ENCODE measurements at regions of chr11 and their contacts with region 1.

Region 1: GRCh38 chr11:74702383-74703007 is 28.7 kb downstream of the CHRDL2 start:
- DNase-seq: peak; percentile 84
- H3K4me3 ChIP-seq: no peak overlapping the region
- H3K27ac ChIP-seq: no peak overlapping the region
- H3K4me1 ChIP-seq: no peaks in the 10 kb centered on the region
- H3K27me3 ChIP-seq: no peaks in the 10 kb centered on the region
- CTCF ChIP-seq: peak; percentile 97

Region 2: GRCh38 chr11:74720596-74721478 is 18.3 kb after region 1 on chr11:
- CTCF ChIA-PET with region 1: interaction called, 34 read pairs
- POLR2A ChIA-PET with region 1: no interaction called
- intact Hi-C with region 1: no loop called
- DNase-seq: no peak
- H3K4me3 ChIP-seq: no peak overlapping the region
- H3K27ac ChIP-seq: no peak overlapping the region
- H3K4me1 ChIP-seq: no peaks in the 10 kb centered on the region
- H3K27me3 ChIP-seq: no peaks in the 10 kb centered on the region
- CTCF ChIP-seq: no peak

Region 3: DNA sequence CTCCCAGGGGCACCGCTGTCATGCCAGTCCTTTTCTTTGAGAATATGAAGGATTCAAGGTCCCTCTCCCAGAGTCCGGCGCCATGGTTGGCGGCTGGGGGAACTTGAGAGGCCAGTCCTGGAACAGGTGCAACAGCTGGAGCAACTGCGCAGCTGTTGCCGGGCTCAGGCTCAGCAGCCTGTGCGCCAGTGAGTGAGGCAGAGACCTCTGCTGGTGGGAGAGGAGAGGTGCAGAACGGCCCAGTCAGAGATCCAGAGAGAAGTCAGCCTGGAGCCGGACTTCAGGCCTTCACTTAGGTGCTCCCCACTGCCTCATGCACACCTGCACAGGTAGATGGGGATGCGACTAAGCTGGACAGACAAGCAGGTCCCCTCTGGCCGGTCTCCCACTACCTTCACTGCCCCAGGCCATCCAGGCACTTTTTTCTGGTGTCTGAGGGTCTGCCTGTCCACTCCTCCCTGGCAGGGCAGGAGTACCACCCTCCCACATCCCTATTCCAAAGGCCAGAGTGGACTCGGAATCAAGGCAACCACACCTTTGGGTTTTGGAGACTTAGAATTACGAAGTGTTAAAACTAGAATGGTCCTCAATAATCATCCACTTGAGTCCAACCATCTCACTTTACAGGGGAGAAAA is 24.2 kb after region 1 on chr11:
- CTCF ChIA-PET with region 1: interaction called, 34 read pairs
- POLR2A ChIA-PET with region 1: no interaction called
- intact Hi-C with region 1: no loop called
- DNase-seq: peak; percentile 73
- H3K4me3 ChIP-seq: no peak overlapping the region
- H3K27ac ChIP-seq: no peak overlapping the region
- H3K4me1 ChIP-seq: no peaks in the 10 kb centered on the region
- H3K27me3 ChIP-seq: peaks cover 37% of the 10 kb centered on the region
- CTCF ChIP-seq: peak; percentile 93

Region 4: DNA sequence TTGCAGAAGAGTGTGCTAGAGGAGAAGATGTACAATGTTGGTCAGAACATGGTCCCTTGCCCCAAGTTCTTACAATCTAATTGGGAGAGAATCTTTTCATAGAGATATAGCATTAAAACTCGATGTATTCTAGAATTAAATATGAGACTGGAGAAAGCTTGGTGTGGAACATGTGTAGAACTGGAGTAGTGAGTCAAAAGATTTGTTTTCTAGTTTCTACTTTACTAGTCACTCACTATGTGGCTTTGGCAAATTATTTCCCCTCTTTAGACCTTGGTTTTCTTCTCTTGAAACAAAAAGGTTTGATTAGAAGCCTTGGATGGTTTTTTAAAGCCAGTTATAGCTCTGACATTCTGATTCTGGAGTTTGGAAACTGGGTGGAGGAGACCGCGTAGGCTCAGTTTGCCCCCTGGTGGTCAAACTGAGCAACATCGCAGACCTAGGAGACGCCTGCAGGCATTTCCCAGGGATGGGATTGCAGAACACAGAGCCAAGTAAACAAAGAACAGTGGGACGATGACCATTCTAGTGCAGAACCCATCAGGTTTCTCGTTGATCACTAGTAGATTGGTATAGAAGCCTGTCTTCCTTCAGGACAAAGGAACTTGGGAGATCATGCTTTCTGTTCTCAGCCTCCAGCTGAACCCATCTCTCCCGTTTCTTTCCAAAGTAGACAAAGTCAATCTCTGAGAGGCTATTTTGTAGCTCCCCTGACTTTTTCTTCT is 37.2 kb after region 1 on chr11:
- CTCF ChIA-PET with region 1: interaction called, 35 read pairs
- POLR2A ChIA-PET with region 1: no interaction called
- intact Hi-C with region 1: loop called (anchors 1 kb)
- DNase-seq: peak; percentile 80
- H3K4me3 ChIP-seq: no peak overlapping the region
- H3K27ac ChIP-seq: no peak overlapping the region
- H3K4me1 ChIP-seq: no peaks in the 10 kb centered on the region
- H3K27me3 ChIP-seq: peaks cover 10% of the 10 kb centered on the region
- CTCF ChIP-seq: peak; percentile 98

Region 5: DNA sequence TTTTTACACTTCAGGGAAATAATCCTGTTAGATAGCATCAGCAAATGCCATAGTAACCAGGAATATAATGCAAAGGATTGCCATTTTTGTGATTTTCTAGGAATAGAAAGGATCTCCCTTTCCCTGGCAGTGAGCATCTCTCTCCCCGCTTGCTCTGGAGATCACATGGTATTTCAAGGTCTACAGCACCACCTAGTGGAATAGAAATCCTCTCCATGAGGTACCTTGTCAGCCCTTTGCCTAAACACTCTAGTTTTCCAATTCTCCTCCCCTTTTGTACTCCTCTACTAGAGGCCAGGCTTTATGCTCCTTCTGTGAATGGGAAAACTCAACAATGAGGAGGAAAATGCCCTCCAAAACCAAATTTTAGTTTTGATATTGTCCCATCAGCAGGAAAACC is 168.0 kb after region 1 on chr11:
- CTCF ChIA-PET with region 1: no interaction called
- POLR2A ChIA-PET with region 1: no interaction called
- intact Hi-C with region 1: loop called (anchors 5 kb)
- DNase-seq: peak; percentile 68
- H3K4me3 ChIP-seq: no peak overlapping the region
- H3K27ac ChIP-seq: no peak overlapping the region
- H3K4me1 ChIP-seq: no peaks in the 10 kb centered on the region
- H3K27me3 ChIP-seq: no peaks in the 10 kb centered on the region
- CTCF ChIP-seq: peak; percentile 48